ENCODE measurements at regions of chr2 and their contacts with region 1.

Region 1: GRCh38 chr2:164560181-164560792 is 61.0 kb downstream of the GRB14 start:
- DNase-seq: peak; percentile 40 to 72 (median 66)
- H3K4me3 ChIP-seq: no peak overlapping the region
- H3K27ac ChIP-seq: no peak overlapping the region
- H3K4me1 ChIP-seq: peaks cover 2 to 28% (median 4%) of the 10 kb centered on the region in 4 experiments
- H3K27me3 ChIP-seq: no peaks in the 10 kb centered on the region

Region 2: GRCh38 chr2:164574925-164575324 is 14.6 kb after region 1 on chr2:
- CTCF ChIA-PET with region 1: interaction called, 15 read pairs
- POLR2A ChIA-PET with region 1: no interaction called
- DNase-seq: peak in 2 of 3 donors; percentile 14 to 16
- H3K4me3 ChIP-seq: no peak overlapping the region
- H3K27ac ChIP-seq: no peak overlapping the region
- H3K4me1 ChIP-seq: no peaks in the 10 kb centered on the region
- H3K27me3 ChIP-seq: no peaks in the 10 kb centered on the region

Region 3: DNA sequence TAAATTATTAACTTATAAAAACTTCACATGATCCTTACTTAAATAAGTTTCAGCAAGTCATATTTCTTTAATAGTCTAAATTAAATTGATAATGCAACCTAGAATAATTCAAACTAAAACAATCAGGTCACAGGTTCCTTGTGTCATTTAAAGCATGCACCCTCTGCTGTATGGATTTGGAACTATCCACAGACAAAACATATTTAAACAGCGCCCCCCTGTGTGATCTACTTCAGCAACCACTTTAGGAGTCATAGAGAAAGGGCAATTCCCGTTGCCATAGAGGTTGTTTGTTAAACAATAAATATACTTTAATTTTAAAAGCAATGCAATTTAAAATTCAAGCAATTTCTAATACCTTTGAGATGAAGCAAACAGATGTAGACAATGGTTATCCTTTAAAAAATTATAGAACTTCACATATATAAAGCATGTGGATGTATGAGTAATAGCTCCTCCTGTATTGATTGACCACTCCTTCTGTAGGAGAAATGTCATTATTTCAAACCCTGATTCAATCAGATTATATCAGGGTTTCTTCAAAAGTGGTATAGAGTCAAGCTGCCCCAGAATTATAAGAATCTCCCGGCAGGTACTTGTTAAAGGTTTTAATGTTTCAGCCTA is 39.8 kb after region 1 on chr2:
- CTCF ChIA-PET with region 1: interaction called, 57 read pairs
- POLR2A ChIA-PET with region 1: no interaction called
- DNase-seq: peak; percentile 87 to 95 (median 94)
- H3K4me3 ChIP-seq: no peak overlapping the region
- H3K27ac ChIP-seq: peak overlapping the region in 1 of 2 experiments; percentile 3
- H3K4me1 ChIP-seq: peaks cover 0 to 12% (median 2%) of the 10 kb centered on the region in 4 experiments
- H3K27me3 ChIP-seq: no peaks in the 10 kb centered on the region

Region 4: DNA sequence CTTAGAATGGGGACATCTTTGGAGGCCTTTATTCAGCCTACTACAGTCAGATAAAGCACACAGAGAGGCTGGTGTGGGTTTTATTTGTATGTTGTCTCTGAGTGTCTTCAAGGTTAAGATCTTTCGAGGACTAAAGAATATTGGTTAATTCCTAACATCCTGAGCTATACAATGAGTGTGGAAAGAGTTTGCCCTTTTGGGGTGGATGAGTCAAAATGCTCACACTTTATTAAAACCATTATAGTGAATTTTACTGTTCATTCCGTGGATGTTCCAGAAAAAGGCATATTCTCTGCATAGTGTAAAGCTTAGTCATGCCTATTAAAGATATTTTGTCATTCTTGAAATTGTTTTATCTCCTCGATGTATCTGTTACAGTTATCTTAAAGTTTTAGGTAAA is 424.1 kb after region 1 on chr2:
- CTCF ChIA-PET with region 1: no interaction called
- POLR2A ChIA-PET with region 1: no interaction called
- DNase-seq: no peak
- H3K4me3 ChIP-seq: no peak overlapping the region
- H3K27ac ChIP-seq: no peak overlapping the region
- H3K4me1 ChIP-seq: peaks cover 2 to 22% (median 11%) of the 10 kb centered on the region in 4 experiments
- H3K27me3 ChIP-seq: no peaks in the 10 kb centered on the region

Measured in common myeloid progenitor, CD34-positive (primary cell).